Right ventricle myocardium inferior (tissue), 1 donor: ENCODE measurements at regions of chr2 and their contacts with region 1.

Region 1: GRCh38 chr2:66555501-66556324 is 120.8 kb downstream of the MEIS1 start:
- DNase-seq: no peak
- ATAC-seq: peak; percentile 60

Region 2: DNA sequence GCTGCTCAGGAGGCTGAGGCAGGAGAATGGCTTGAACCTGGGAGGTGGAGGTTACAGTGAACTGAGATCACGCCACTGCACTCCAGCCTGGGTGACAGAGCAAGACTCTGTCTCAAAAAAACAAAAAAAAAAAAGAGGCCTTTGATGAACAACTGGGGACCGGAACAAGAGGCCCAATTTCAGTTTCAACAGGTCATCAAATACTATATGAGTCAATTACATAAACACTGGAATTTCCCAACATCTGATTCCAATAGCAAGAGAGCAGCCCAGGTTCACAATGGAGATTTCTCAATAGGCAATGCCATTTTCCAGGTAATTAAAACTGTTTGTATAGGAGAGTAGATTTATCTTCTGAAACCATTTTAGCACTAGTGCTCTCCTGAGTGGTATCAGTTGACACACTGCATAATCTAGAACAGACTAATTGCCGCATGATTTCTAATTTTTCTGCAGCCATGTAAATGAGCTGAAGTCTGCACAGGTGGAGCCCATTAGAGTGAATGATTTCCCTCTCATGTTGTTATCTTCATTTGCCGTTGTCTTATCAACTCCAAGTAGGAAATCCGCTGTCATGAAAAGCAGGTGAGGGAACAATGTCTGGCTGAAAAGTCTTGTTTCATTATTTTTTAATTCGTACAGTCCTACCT is 384.9 kb before region 1 on chr2:
- intact Hi-C with region 1: no loop called
- DNase-seq: no peak
- ATAC-seq: no peak

Region 3: DNA sequence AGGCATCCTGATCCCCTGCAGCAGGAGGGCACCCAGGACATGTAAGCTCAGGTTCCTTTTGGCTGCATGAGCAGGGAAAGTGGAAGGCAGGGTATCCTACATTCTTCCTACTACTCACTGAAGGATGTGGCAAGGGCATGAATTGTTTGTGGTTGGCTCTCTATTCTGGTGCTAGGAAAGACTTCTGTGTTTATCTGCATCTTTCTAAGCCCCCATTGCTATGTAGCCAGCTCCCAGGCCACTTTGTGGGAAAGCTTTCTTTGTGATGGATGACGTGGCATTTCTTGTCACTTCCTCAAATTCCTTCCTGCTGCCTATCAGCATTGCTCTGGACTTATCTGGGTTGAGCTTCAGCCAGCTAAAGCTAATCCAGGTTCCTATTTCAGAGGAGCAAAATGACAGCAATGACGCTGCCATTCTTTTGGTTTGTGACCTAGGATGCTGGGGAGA is 74.6 kb before region 1 on chr2:
- intact Hi-C with region 1: no loop called
- DNase-seq: no peak
- ATAC-seq: peak; percentile 74

Region 4: GRCh38 chr2:66536997-66537396 is 18.7 kb before region 1 on chr2:
- intact Hi-C with region 1: loop called (anchors 2 kb)
- DNase-seq: no peak
- ATAC-seq: peak; percentile 61